Left ventricle myocardium superior (tissue), 1 donor: ENCODE measurements at regions of chr10 and their contacts with region 1.

Region 1: GRCh38 chr10:123582084-123582989 is 83.8 kb upstream of the GPR26 start:
- DNase-seq: peak; percentile 78
- ATAC-seq: peak; percentile 77

Region 2: DNA sequence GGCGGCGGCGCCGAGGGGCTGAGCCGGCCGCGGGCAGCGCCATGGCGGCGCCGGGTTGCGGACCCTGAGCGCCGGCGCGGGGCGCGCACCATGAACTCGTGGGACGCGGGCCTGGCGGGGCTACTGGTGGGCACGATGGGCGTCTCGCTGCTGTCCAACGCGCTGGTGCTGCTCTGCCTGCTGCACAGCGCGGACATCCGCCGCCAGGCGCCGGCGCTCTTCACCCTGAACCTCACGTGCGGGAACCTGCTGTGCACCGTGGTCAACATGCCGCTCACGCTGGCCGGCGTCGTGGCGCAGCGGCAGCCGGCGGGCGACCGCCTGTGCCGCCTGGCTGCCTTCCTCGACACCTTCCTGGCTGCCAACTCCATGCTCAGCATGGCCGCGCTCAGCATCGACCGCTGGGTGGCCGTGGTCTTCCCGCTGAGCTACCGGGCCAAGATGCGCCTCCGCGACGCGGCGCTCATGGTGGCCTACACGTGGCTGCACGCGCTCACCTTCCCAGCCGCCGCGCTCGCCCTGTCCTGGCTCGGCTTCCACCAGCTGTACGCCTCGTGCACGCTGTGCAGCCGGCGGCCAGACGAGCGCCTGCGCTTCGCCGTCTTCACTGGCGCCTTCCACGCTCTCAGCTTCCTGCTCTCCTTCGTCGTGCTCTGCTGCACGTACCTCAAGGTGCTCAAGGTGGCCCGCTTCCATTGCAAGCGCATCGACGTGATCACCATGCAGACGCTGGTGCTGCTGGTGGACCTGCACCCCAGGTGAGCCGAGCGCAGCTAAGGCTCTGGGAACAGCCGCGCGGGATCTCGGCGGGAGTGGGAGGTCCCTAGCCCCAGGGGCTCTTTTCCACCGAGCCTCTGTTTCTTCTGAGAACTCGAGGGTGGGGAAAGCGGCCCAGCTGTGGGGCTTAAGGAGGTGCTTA is 84.2 kb after region 1 on chr10 and contains the start of gene GPR26:
- intact Hi-C with region 1: no loop called
- DNase-seq: no peak
- ATAC-seq: no peak
- total RNA-seq, gene GPR26: not detected

Region 3: DNA sequence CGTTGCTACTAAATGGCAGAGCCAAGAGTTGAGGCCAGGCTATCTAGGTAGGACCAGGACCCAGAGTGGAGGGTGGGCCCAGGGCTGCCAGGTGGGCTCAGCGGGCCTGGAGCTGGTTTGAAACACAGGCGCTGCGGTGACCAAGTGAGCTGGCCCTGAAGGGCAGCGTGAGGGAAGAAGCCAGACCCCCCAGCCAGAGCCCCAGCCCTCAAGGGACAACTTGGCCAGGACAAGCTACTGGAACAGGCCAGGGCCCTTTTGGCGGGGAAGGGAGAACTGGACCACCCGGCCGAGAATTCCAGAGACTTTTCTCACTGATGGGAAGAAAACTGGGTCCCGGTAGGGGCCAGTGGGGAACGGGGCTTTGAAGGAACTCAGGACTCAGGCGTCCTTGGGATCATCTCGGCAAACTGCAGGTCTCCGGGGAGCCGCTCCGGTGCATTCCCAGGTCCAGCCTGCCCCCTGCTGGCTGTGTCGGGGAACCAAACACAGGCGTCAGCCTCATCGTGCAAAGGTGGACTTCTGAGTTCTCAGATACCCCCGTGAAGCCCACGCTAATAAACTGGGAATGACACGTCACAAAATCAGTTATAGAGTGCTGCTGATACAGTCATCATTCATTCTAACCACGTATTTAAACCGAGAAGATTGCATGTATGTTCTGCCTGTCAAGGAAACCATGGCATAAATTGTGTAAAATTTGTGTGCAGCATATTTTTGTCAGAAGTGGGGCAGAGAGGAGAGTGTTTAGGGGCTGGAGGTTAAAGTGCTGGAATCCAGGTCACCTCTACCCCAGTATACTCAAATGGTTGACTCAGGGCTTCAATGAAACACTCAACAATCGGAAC is 385.3 kb after region 1 on chr10:
- intact Hi-C with region 1: loop called (anchors 5 kb)
- DNase-seq: peak; percentile 79
- ATAC-seq: peak; percentile 79